Colonic mucosa (tissue), 4 donors: ENCODE measurements at regions of chr2 and their contacts with region 1.

Region 1: DNA sequence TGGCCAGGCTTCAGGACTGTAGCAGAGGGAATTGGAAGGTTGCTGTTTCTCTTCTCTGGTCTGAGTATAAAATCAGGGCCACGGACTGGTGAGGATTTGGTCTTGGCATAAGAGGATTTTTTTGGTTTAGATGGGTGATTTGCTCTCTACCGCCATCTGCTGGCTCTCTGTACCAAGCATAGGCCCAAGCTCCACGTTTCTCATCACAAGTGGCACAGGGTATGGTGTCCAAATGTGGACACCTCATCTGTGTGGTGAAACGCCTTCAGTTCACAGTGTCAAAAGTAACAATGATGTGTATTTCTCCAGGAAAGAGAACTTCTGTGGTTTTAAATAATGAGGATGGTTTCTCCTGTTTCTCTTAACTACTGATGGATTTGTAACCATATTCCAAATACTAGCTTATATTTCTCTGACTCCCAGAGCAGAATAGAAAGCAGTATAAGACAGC is 115.1 kb downstream of the EML6 start:
- DNase-seq: peak; percentile 73
- H3K4me3 ChIP-seq: no peak overlapping the region
- H3K27ac ChIP-seq: no peak overlapping the region
- H3K4me1 ChIP-seq: no peaks in the 10 kb centered on the region
- H3K27me3 ChIP-seq: no peaks in the 10 kb centered on the region
- CTCF ChIP-seq: peak; percentile 84

Region 2: GRCh38 chr2:54665436-54665856 is 173.2 kb before region 1 on chr2:
- intact Hi-C with region 1: loop called (anchors 10 kb)
- DNase-seq: peak; percentile 54
- H3K4me3 ChIP-seq: no peak overlapping the region
- H3K27ac ChIP-seq: peak overlapping the region; percentile 45
- H3K4me1 ChIP-seq: no peaks in the 10 kb centered on the region
- H3K27me3 ChIP-seq: no peaks in the 10 kb centered on the region
- CTCF ChIP-seq: peak; percentile 66

Region 3: DNA sequence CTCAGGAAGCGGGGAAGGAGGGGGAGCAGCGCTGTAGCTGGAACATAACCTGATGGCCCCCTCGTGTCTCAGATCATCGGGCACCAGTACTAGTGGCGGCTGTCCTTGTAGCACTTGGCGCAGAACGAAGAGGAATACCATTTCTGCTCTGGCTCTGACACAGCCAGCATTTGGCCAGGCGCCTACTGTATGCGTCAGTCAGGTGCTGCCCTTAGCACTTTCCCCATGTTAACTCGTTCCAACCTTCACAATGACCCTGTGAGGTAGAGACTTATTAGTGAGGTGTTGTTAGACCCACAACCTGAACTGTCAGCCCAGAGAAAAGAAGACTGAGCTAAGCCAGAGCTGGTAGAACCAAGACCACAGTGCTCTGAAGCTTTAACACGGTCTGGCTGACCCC is 162.9 kb before region 1 on chr2:
- intact Hi-C with region 1: no loop called
- DNase-seq: no peak
- H3K4me3 ChIP-seq: no peak overlapping the region
- H3K27ac ChIP-seq: no peak overlapping the region
- H3K4me1 ChIP-seq: no peaks in the 10 kb centered on the region
- H3K27me3 ChIP-seq: no peaks in the 10 kb centered on the region
- CTCF ChIP-seq: no peak

Region 4: DNA sequence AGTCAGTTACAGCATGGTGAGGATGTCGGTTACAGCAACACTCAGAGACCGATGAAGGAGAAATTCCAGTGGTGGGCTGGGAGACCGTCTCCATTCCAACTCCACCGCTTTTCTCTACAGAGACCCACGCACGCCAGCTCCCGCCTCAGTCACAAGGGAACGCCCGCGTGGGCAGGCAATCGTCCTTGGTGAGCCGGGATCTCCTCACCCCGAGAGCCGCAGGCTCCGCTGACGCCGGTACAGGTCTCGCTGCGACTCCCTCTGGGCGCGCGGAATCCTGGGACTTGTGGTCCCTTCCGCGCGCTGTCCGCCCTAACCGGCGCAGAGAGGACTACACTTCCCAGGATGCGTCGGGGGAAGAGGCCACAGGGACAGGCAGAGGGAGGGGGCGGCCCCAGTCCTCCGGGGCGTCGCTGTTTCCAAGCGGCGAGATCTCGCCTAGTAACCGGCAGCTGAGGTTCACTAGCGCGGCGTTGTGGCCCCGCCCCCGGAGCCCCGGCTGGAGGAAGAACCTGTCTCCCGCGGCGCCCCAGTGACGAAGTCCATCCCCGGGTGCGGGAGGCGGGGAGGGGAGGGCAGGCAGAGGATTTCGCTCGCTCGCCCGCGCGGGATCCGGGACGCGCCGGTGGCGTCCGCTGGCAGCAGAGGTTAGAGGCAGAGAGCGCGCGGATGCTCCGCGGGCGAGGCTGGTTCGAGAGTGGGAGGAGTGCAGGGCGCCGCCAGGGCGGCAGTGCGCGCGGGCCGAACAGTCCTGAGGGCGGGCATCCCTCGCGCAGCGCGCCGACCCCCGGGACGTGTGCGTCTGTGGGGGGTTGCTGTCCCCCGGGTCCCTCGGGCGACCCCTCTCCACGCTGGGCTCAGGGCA is 115.2 kb before region 1 on chr2 and contains the start of gene EML6:
- intact Hi-C with region 1: loop called (anchors 5 kb)
- DNase-seq: peak; percentile 99
- H3K4me3 ChIP-seq: peak within 1 kb of the TSS; percentile 83
- H3K27ac ChIP-seq: peak within 1 kb of the TSS; percentile 40
- H3K4me1 ChIP-seq: no peaks in the 10 kb centered on the region
- H3K27me3 ChIP-seq: peaks cover 10% of the 10 kb centered on the region
- CTCF ChIP-seq: no peak
- total RNA-seq, gene EML6: 2.1 to 2.5 TPM

Region 5: GRCh38 chr2:54741250-54741649 is 97.4 kb before region 1 on chr2:
- intact Hi-C with region 1: no loop called
- DNase-seq: no peak
- H3K4me3 ChIP-seq: no peak overlapping the region
- H3K27ac ChIP-seq: no peak overlapping the region
- H3K4me1 ChIP-seq: no peaks in the 10 kb centered on the region
- H3K27me3 ChIP-seq: no peaks in the 10 kb centered on the region
- CTCF ChIP-seq: no peak

Region 6: DNA sequence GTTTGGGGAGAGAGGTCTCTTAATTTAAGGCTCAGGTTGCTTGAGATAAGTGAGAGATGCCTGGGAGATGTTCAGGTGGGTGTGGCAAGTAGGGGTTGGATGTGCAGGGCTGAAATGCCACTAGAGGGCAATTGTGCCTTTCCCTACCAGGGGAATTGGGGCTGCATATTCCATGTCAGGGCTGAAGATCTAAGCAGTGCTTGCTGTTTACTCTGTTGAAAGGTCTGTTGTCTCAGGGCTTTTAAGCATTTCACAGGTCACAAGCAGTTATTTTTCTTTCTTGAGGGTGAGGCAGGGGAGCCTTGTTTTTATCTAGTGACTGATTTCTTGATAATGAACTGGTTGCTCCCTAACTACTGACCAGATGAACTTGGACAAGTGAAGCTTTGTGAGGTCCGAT is 1353.1 kb after region 1 on chr2:
- intact Hi-C with region 1: no loop called
- DNase-seq: peak; percentile 30
- H3K4me3 ChIP-seq: no peak overlapping the region
- H3K27ac ChIP-seq: no peak overlapping the region
- H3K4me1 ChIP-seq: no peaks in the 10 kb centered on the region
- H3K27me3 ChIP-seq: peaks cover 6% of the 10 kb centered on the region
- CTCF ChIP-seq: no peak